Calu3 (cell line): ENCODE measurements at regions of chr10 and their contacts with region 1.

Region 1: GRCh38 chr10:84429926-84430520 is 101.6 kb downstream of the CCSER2 start:
- DNase-seq: peak; percentile 76
- H3K4me3 Mint-ChIP-seq: no peak overlapping the region
- H3K27ac Mint-ChIP-seq: no peak overlapping the region
- H3K4me1 Mint-ChIP-seq: peaks cover 22% of the 10 kb centered on the region
- H3K27me3 Mint-ChIP-seq: no peaks in the 10 kb centered on the region
- CTCF ChIP-seq: peak; percentile 57

Region 2: DNA sequence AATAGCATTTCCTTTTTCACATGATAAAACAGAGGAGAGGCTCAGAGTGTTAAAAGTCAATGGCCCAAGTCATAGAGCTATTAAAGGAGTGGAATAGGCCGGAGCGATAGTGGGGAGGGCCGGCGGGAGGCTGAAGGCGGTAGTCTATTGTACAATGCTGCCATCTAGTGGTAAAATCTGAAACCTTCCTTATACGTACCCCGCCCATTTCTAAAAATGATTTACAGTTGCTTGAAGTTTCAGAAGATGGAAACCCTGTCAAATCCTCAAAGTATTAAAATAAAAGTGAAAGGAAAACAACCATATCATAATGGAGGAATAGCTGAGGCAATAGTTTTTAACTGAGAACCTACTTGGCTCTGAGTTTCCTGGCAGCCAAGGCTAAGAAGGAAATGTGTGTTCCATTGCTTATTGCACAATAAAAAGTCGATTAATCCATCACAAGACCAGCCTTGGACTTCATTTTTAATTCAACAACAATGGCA is 107.5 kb after region 1 on chr10:
- CTCF ChIA-PET with region 1: interaction called, 25 read pairs
- intact Hi-C with region 1: loop called (anchors 1 kb)
- DNase-seq: peak; percentile 37
- H3K4me3 Mint-ChIP-seq: no peak overlapping the region
- H3K27ac Mint-ChIP-seq: no peak overlapping the region
- H3K4me1 Mint-ChIP-seq: no peaks in the 10 kb centered on the region
- H3K27me3 Mint-ChIP-seq: no peaks in the 10 kb centered on the region
- CTCF ChIP-seq: peak; percentile 52